ENCODE measurements at regions of chr1 and their contacts with region 1.

Region 1: DNA sequence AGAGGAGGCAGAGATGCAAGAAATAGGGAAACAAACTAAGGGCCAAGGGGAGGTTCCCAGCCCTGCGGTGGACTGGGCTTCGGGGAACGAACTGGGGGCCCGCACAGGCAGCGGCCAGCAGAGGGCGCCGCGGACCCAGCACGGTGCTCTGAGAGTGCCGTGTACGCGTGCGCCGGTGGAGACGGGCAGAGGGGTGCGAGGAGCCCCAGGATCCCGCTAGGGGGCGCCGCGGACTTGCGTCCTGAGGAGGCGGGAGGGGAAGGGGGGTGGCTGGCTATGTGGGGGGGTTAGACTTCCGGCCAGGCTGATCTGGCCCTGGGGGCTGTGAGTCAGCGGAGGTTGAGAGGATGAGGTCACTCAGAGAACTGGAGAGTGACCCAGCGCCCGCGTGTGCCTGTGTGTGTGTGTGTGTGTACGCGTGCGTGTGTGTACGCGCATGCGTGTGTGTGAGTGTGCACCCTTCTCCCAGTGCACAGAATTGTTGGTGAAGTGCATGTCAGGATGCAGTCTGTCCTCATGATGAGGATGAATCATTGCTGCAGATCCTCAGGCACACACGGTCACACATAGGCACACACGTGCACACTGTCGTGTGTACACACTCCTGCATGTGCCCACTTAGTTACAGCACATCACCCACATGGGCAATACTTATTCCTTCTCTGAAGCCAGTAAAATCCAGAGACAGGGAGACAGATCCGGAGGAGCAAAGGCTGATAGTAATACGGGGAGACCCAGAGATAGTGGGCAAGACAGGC is 17.0 kb downstream of the NES start:
- DNase-seq: peak; percentile 96
- ATAC-seq: peak; percentile 87
- H3K4me3 Mint-ChIP-seq: peak overlapping the region; percentile 72
- H3K27ac Mint-ChIP-seq: peak overlapping the region; percentile 90
- H3K4me1 Mint-ChIP-seq: peaks cover 77% of the 10 kb centered on the region
- H3K27me3 Mint-ChIP-seq: peaks cover 29% of the 10 kb centered on the region

Region 2: DNA sequence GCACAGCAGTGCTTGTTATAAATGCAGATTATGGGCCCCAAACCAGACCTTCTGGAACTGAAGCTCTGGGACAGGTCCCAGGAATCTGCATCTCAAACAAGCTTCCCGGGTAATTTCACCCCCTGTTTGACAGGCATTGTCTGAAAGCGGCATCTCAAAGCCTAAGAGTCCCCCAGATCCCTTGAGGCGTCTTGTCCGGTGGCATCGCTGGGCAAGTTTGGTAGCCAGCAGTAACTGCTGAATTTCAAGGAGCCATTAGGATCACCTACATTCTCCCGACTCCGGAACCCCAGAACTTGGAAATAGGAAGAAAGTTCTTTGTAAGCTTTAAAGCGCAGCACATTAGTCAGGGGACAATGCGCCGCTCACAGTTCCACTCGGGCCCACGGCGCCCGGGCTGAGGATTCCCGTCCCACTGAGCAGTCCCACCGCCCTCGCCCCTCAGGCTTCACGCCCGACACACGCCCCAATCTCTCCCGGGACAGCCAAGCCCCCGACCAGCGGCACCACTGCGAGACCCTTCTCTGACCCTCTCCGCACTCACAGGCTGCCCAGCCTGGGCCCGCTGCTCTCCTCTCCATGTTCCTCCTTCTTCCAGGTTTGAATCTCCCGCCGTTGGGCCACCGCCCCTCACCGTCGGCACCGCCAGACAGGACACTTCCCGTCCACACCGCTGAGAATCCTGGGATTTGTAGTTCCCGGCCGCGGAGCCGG is 88.1 kb before region 1 on chr1 and contains the start of gene IQGAP3:
- CTCF ChIA-PET with region 1: no interaction called
- POLR2A ChIA-PET with region 1: no interaction called
- DNase-seq: peak; percentile 86
- ATAC-seq: peak; percentile 96
- H3K4me3 Mint-ChIP-seq: peak within 1 kb of the TSS; percentile 97
- H3K27ac Mint-ChIP-seq: peak within 1 kb of the TSS; percentile 80
- H3K4me1 Mint-ChIP-seq: peaks cover 23% of the 10 kb centered on the region
- H3K27me3 Mint-ChIP-seq: peaks cover 11% of the 10 kb centered on the region
- total RNA-seq, gene IQGAP3: 28.6 to 31.0 TPM

Region 3: GRCh38 chr1:156618853-156619581 is 41.2 kb before region 1 on chr1 and contains the start of gene HAPLN2:
- CTCF ChIA-PET with region 1: interaction called, 240 read pairs
- POLR2A ChIA-PET with region 1: no interaction called
- DNase-seq: peak; percentile 37
- ATAC-seq: no peak
- H3K4me3 Mint-ChIP-seq: no peak within 1 kb of the TSS
- H3K27ac Mint-ChIP-seq: no peak within 1 kb of the TSS
- H3K4me1 Mint-ChIP-seq: peaks cover 5% of the 10 kb centered on the region
- H3K27me3 Mint-ChIP-seq: peaks cover 58% of the 10 kb centered on the region
- total RNA-seq, gene HAPLN2: not detected

Region 4: GRCh38 chr1:156641761-156642264 is 18.4 kb before region 1 on chr1 and contains the start of gene BCAN:
- CTCF ChIA-PET with region 1: interaction called, 33 read pairs
- POLR2A ChIA-PET with region 1: interaction called, 3 read pairs
- DNase-seq: no peak
- ATAC-seq: peak; percentile 30
- H3K4me3 Mint-ChIP-seq: peak within 1 kb of the TSS; percentile 29
- H3K27ac Mint-ChIP-seq: no peak within 1 kb of the TSS
- H3K4me1 Mint-ChIP-seq: peaks cover 37% of the 10 kb centered on the region
- H3K27me3 Mint-ChIP-seq: peaks cover 77% of the 10 kb centered on the region
- total RNA-seq, gene BCAN: not detected

Region 5: DNA sequence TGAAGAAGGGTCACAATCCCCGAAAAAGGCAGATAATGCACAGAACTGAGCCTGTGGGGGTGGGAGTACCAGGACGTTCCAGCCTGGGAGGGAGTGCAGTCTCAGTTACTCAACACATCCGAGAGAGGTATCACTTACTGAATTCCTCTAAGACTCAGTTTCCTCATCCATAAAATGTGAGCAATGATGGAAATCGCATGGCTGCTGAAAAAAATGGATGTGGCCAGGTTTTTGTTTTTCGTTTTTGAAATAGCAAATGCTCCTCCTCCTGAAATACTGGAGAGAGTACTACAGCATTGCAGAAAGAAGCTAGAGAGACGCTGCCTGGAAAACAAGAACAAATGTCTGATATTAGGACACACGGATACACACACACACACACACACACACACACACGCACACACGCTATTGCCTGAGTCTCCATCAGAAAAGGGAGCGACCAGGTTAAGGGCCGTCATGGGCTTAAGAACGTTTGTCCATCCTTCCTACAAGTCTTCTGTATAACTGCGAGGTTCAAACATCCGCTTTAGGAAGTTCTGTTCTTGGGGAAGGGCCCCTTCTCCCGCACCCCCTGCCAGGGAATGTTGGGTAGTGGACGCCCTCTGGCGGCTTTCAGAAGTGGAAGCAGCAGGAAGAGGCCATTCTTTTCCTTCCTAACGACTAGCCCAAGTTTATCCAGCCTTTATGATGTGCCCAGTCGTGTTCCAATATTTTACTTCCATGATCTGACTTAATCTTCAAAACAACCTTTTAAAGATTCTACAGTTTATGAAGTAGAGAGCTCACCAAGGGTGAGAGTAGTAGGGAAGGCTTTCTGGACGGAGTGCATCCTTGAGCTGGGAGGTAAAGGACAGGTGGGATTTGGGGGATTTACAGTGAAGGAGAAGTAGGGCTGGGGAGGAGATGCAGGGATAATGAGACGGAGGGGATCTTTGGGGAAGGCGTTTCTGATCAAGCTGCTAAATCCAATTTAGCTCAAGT is 17.7 kb after region 1 on chr1:
- CTCF ChIA-PET with region 1: interaction called, 135 read pairs
- POLR2A ChIA-PET with region 1: interaction called, 4 read pairs
- DNase-seq: peak; percentile 41
- ATAC-seq: peak; percentile 43
- H3K4me3 Mint-ChIP-seq: no peak overlapping the region
- H3K27ac Mint-ChIP-seq: no peak overlapping the region
- H3K4me1 Mint-ChIP-seq: peaks cover 16% of the 10 kb centered on the region
- H3K27me3 Mint-ChIP-seq: peaks cover 69% of the 10 kb centered on the region

Region 6: GRCh38 chr1:156705918-156706656 is 45.9 kb after region 1 on chr1:
- CTCF ChIA-PET with region 1: interaction called, 53 read pairs
- POLR2A ChIA-PET with region 1: interaction called, 5 read pairs
- DNase-seq: peak; percentile 70
- ATAC-seq: peak; percentile 65
- H3K4me3 Mint-ChIP-seq: peak overlapping the region; percentile 71
- H3K27ac Mint-ChIP-seq: no peak overlapping the region
- H3K4me1 Mint-ChIP-seq: peaks cover 28% of the 10 kb centered on the region
- H3K27me3 Mint-ChIP-seq: peaks cover 33% of the 10 kb centered on the region

Measured in activated CD8-positive, alpha-beta T cell treated with anti-CD3 and anti-CD28 coated beads, Interleukin-2, amount 10 ng/mL, durations not matched to agents 7 days and 5 days (primary cell).